Caco-2 (cell line): ENCODE measurements at regions of chr17 and their contacts with region 1.

Region 1: GRCh38 chr17:68172461-68172954 is 75.3 kb upstream of the AMZ2 start:
- DNase-seq: peak; percentile 78
- H3K4me3 ChIP-seq: no peak overlapping the region
- H3K4me3 Mint-ChIP-seq: no peak overlapping the region
- H3K27ac Mint-ChIP-seq: no peak overlapping the region
- H3K4me1 ChIP-seq: no peaks in the 10 kb centered on the region
- H3K4me1 Mint-ChIP-seq: no peaks in the 10 kb centered on the region
- H3K27me3 ChIP-seq: no peaks in the 10 kb centered on the region; the same call in 1 of the 2 replicates
- H3K27me3 Mint-ChIP-seq: no peaks in the 10 kb centered on the region
- CTCF ChIP-seq: peak; percentile 92 to 98

Region 2: GRCh38 chr17:68143425-68143824 is 29.1 kb before region 1 on chr17:
- CTCF ChIA-PET with region 1: no interaction called
- POLR2A ChIA-PET with region 1: no interaction called
- intact Hi-C with region 1: no loop called
- DNase-seq: no peak
- H3K4me3 ChIP-seq: no peak overlapping the region
- H3K4me3 Mint-ChIP-seq: no peak overlapping the region
- H3K27ac Mint-ChIP-seq: no peak overlapping the region
- H3K4me1 ChIP-seq: no peaks in the 10 kb centered on the region
- H3K4me1 Mint-ChIP-seq: no peaks in the 10 kb centered on the region
- H3K27me3 ChIP-seq: no peaks in the 10 kb centered on the region; the same call in 1 of the 2 replicates
- H3K27me3 Mint-ChIP-seq: peaks cover 6% of the 10 kb centered on the region
- CTCF ChIP-seq: no peak

Region 3: GRCh38 chr17:68205251-68205807 is 32.8 kb after region 1 on chr17:
- CTCF ChIA-PET with region 1: interaction called, 14 read pairs
- POLR2A ChIA-PET with region 1: no interaction called
- intact Hi-C with region 1: loop called (anchors 1 kb)
- DNase-seq: peak; percentile 81 to 90
- H3K4me3 ChIP-seq: peak overlapping the region; percentile 91
- H3K4me3 Mint-ChIP-seq: peak overlapping the region; percentile 67
- H3K27ac Mint-ChIP-seq: no peak overlapping the region
- H3K4me1 ChIP-seq: peaks cover 7% of the 10 kb centered on the region
- H3K4me1 Mint-ChIP-seq: peaks cover 2% of the 10 kb centered on the region
- H3K27me3 ChIP-seq: peaks cover 3% of the 10 kb centered on the region; the same call in 1 of the 2 replicates
- H3K27me3 Mint-ChIP-seq: peaks cover 6% of the 10 kb centered on the region
- CTCF ChIP-seq: peak; percentile 87 to 93

Region 4: GRCh38 chr17:68247445-68248198 is 75.1 kb after region 1 on chr17 and contains the start of gene AMZ2:
- CTCF ChIA-PET with region 1: interaction called, 4 read pairs
- POLR2A ChIA-PET with region 1: no interaction called
- intact Hi-C with region 1: loop called (anchors 5 kb)
- DNase-seq: peak; percentile 93 to 97
- H3K4me3 ChIP-seq: peak within 1 kb of the TSS; percentile 79
- H3K4me3 Mint-ChIP-seq: peak within 1 kb of the TSS; percentile 97
- H3K27ac Mint-ChIP-seq: peak within 1 kb of the TSS; percentile 81
- H3K4me1 ChIP-seq: peaks cover 6% of the 10 kb centered on the region
- H3K4me1 Mint-ChIP-seq: peaks cover 7% of the 10 kb centered on the region
- H3K27me3 ChIP-seq: no peaks in the 10 kb centered on the region
- H3K27me3 Mint-ChIP-seq: peaks cover 12% of the 10 kb centered on the region
- CTCF ChIP-seq: no peak
- total RNA-seq, gene AMZ2: 52.2 and 60.2 TPM in 2 replicates